ENCODE measurements at regions of chr14 and their contacts with region 1.

Region 1: DNA sequence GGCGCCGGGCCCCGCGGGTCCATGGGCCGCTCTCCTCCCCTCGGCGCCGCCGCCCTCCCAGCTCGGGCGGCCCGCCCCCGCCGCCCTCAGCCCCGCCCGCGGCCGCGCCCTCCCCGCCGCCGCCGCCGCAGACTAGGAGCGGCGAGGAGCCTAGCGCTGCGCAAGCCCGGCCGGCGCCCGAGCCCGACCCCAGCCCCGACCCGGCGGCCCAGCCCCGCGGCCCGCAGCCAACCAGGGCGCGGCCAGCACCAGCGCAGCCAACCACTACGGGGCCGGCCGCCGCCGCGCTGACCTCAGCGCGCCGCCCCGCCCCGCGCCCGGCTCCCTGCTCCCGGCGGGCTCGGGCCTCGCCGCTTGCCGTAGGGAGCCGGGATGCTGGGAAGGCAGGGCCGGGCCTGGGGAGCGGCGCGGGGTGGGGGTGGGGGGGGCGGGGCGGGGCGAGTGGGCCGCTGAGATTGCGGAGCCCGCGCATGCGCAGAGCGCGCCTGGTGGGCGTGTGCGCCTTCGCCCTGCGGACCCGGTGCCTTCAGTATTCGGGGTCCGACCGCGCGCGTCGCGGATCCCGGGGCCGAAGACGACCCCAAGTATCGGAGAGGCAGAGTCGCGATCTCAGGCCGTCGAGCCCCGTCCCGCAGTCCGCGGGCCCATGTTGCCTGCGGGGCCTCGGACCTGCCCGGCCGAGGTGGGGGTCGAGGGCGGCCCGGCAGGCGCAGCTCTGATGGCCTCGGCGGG is at the start of gene CDC42BPB:
- DNase-seq: peak; percentile 82
- ATAC-seq: peak; percentile 89
- H3K4me3 Mint-ChIP-seq: peak within 1 kb of the TSS; percentile 87
- H3K27ac Mint-ChIP-seq: no peak within 1 kb of the TSS
- H3K4me1 Mint-ChIP-seq: peaks cover 32% of the 10 kb centered on the region
- H3K27me3 Mint-ChIP-seq: peaks cover 2% of the 10 kb centered on the region
- CTCF ChIP-seq: no peak
- total RNA-seq, gene CDC42BPB: 34.2 and 38.5 TPM in 2 replicates

Region 2: DNA sequence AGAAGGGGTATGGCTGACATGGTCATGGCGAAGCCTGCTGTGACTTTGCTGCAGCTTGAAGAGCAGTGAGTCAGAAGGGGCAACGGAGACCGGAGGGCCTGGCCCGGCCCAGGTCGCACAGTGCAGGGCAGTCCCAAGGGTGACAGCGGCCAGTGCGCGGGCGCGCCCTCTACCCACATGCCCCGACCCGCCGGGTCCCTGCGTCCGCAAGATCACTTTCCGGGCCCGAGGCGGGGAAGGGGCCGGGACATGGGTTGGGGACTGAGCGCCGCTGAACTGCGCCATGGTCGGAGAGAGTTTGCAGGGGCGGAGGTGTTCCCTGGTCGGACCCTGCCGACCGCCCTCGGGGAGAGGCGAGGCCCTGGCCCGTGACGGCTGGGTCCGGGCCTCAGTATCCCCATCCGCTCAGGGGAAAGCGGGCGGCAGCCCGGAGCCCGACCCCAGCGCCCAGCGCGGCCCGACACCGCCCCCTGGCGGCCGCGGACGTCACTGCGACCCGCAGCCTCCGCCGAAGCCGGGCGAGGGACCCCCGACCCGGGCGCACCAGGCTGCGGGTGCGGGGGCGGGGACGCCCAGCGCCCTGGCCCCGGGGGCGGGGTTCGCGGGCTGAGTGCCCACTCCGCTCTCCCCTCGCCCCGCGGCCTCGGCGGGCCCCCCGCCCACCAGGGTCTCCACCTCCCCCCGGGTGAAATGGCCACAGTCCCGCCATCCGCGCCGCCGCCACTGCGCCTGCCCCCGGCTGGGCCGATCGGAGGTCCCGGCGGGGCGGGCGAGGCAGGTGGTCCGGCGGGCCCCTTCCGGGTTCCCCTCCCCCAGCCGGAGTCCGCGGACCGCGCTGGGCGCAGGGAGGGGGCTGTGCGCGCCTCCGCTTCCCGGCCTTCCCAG is 540.8 kb before region 1 on chr14:
- CTCF ChIA-PET with region 1: no interaction called
- POLR2A ChIA-PET with region 1: no interaction called
- intact Hi-C with region 1: no loop called
- DNase-seq: peak; percentile 79
- ATAC-seq: peak; percentile 88
- H3K4me3 Mint-ChIP-seq: peak overlapping the region; percentile 81
- H3K27ac Mint-ChIP-seq: no peak overlapping the region
- H3K4me1 Mint-ChIP-seq: peaks cover 3% of the 10 kb centered on the region
- H3K27me3 Mint-ChIP-seq: peaks cover 3% of the 10 kb centered on the region
- CTCF ChIP-seq: peak; percentile 48

Region 3: GRCh38 chr14:103045371-103045869 is 12.1 kb before region 1 on chr14:
- CTCF ChIA-PET with region 1: no interaction called
- POLR2A ChIA-PET with region 1: interaction called, 5 read pairs
- intact Hi-C with region 1: loop called (anchors 1 kb)
- DNase-seq: no peak
- ATAC-seq: peak; percentile 80
- H3K4me3 Mint-ChIP-seq: peak overlapping the region; percentile 76
- H3K27ac Mint-ChIP-seq: peak overlapping the region; percentile 72
- H3K4me1 Mint-ChIP-seq: peaks cover 31% of the 10 kb centered on the region
- H3K27me3 Mint-ChIP-seq: no peaks in the 10 kb centered on the region
- CTCF ChIP-seq: no peak